PC-9 (cell line): ENCODE measurements at regions of chr16 and their contacts with region 1.

Region 1: DNA sequence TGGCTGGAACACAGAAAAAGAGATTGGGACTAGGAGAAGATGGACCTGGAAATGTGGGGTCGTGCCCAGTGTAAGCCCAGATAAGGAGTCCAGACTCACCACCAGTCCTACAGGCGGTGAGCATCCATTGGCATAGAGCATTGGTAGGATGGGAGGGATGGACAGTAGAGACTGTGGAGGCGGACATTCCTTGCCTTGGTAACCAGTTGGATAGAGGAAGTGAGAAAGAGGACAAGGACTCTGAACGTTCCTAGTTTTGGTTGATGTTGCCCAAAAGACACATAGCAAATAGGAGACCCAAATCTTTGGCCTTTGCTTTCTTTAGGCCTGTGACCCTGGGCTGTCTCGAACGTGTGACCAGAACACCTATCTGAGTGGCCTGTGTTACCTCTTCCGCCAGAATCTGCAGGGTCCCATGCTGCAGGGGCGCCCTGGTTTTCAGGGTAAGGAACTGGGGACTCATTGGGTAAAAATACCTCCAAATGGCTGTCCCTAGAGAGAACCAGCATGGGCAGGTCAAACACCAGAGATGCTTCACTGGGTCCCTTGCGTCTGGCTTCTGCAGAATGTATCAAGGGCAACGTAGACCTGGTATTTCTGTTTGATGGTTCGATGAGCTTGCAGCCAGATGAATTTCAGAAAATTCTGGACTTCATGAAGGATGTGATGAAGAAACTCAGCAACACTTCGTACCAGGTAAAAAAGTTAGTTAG is 6.4 kb downstream of the ITGAL start:
- DNase-seq: no peak
- H3K4me3 ChIP-seq: no peak overlapping the region
- H3K27ac ChIP-seq: no peak overlapping the region
- H3K4me1 ChIP-seq: no peaks in the 10 kb centered on the region
- H3K27me3 ChIP-seq: peaks cover 14% of the 10 kb centered on the region; the same call in 1 of the 2 replicates
- CTCF ChIP-seq: no peak

Region 2: GRCh38 chr16:30602616-30603277 is 123.8 kb after region 1 on chr16:
- CTCF ChIA-PET with region 1: interaction called, 21 read pairs
- POLR2A ChIA-PET with region 1: no interaction called
- intact Hi-C with region 1: no loop called
- DNase-seq: no peak
- H3K4me3 ChIP-seq: no peak overlapping the region
- H3K27ac ChIP-seq: no peak overlapping the region
- H3K4me1 ChIP-seq: no peaks in the 10 kb centered on the region
- H3K27me3 ChIP-seq: no peaks in the 10 kb centered on the region
- CTCF ChIP-seq: no peak

Region 3: GRCh38 chr16:30678586-30678970 is 199.7 kb after region 1 on chr16:
- CTCF ChIA-PET with region 1: no interaction called
- POLR2A ChIA-PET with region 1: no interaction called
- intact Hi-C with region 1: no loop called
- DNase-seq: no peak
- H3K4me3 ChIP-seq: no peak overlapping the region
- H3K27ac ChIP-seq: no peak overlapping the region
- H3K4me1 ChIP-seq: no peaks in the 10 kb centered on the region
- H3K27me3 ChIP-seq: no peaks in the 10 kb centered on the region
- CTCF ChIP-seq: no peak